ENCODE measurements at regions of chr11 and their contacts with region 1.

Region 1: DNA sequence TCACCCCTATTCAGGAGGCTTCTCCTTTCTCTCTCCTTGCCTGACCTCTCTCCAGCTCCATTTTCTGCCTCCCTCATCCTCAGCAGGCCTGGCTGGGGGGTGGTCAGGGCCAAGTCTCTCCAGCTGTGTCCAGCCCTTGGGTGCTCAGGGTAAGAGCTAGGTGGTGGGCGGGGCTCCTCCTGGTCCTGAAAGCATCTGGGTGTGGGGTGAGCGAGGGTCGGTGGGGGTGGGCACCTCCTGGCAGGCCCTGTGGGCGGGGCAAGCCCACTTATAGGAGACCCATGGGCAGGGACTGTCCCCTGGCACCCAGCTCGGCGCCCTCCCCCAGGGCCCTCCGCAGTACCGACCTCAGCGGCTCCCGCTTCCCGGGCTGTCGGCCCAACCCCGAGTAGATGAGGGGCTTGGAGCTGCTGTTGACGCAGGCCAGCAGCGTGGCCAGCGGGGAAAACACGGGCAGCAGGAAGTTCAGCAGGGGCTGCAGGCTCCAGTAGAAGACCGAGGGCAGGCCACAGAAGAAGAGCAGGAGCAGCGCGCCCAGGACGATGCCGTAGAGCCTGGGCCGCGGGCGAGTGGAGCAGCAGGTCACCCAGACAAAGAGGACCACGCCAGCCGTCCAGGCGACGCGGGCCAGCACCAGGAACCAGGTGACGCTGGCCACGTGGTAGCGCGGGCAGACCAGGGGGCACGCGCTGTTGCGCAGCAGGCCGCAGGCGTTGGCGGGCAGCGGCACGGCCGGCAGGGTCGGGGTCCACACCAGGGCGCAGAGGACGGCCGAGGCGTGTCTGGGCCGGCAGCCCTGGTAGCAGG is 734 bp downstream of the MRGPRG start:
- DNase-seq: no peak
- H3K4me3 Mint-ChIP-seq: no peak overlapping the region
- H3K27ac Mint-ChIP-seq: no peak overlapping the region
- H3K4me1 Mint-ChIP-seq: peaks cover 7% of the 10 kb centered on the region
- H3K27me3 Mint-ChIP-seq: peaks cover 23% of the 10 kb centered on the region

Region 2: GRCh38 chr11:3109921-3110706 is 107.8 kb before region 1 on chr11:
- CTCF ChIA-PET with region 1: interaction called, 19 read pairs
- POLR2A ChIA-PET with region 1: no interaction called
- intact Hi-C with region 1: loop called (anchors 1 kb)
- DNase-seq: peak; percentile 62
- H3K4me3 Mint-ChIP-seq: no peak overlapping the region
- H3K27ac Mint-ChIP-seq: no peak overlapping the region
- H3K4me1 Mint-ChIP-seq: no peaks in the 10 kb centered on the region
- H3K27me3 Mint-ChIP-seq: peaks cover 2% of the 10 kb centered on the region